ENCODE measurements at regions of chr20 and their contacts with region 1.

Region 1: DNA sequence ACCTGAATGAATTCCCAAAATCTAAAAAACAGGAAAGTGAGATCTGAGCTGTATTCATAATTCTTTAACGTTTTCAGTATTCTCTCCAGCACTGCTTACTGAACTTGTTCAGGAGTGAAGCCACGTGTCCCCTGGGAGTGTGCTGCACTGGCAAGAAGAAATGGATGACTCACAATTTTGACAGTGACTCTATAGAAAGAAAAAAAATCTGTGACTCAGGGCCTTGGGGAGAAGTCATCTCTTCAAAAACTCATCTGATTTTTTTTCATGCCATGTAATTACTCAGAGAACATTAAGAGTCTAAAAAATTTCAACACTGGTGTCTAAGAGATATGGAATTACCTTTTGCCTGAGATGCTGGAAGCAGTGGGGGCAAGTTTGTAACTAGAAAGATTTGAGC is 39.7 kb downstream of the ANKEF1 start:
- DNase-seq: peak; percentile 76
- H3K4me3 ChIP-seq: no peak overlapping the region
- H3K27ac ChIP-seq: peak overlapping the region; percentile 50
- H3K4me1 ChIP-seq: peaks cover 43% of the 10 kb centered on the region
- H3K27me3 ChIP-seq: no peaks in the 10 kb centered on the region
- CTCF ChIP-seq: no peak
- POLR2A ChIP-seq: no peak

Region 2: DNA sequence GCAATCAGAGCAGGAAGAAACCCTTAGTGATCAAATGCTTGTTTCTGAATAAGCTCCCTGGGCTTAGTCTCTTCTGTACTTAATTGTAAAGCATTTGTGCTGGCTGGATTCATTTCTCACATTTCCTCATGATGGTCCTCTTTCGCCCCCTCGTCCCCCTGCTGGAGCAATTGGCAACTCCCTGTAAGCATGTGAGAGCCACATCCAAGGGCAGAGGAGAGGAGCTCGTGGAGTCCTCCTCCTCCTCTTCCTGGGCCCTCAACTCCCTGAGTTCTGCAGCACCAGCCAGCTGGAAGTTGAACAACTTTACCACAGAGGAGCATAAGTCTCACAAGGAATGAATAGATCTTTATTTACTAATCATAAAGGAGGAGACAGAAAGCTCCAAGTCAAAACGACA is 27.1 kb before region 1 on chr20:
- CTCF ChIA-PET with region 1: interaction called, 5 read pairs
- POLR2A ChIA-PET with region 1: no interaction called
- dilution Hi-C with region 1: no loop called
- intact Hi-C with region 1: loop called (anchors 2 kb)
- DNase-seq: no peak
- H3K4me3 ChIP-seq: no peak overlapping the region
- H3K27ac ChIP-seq: no peak overlapping the region
- H3K4me1 ChIP-seq: no peaks in the 10 kb centered on the region
- H3K27me3 ChIP-seq: no peaks in the 10 kb centered on the region
- CTCF ChIP-seq: peak; percentile 12 to 28
- POLR2A ChIP-seq: no peak

Region 3: GRCh38 chr20:10219452-10219791 is 144.9 kb after region 1 on chr20:
- CTCF ChIA-PET with region 1: interaction called, 5 read pairs
- POLR2A ChIA-PET with region 1: interaction called, 3 read pairs
- dilution Hi-C with region 1: no loop called
- intact Hi-C with region 1: loop called (anchors 1 kb)
- DNase-seq: peak; percentile 78
- H3K4me3 ChIP-seq: peak overlapping the region in 2 of 3 experiments; percentile 26 to 75
- H3K27ac ChIP-seq: no peak overlapping the region
- H3K4me1 ChIP-seq: peaks cover 4% of the 10 kb centered on the region
- H3K27me3 ChIP-seq: peaks cover 24 to 36% of the 10 kb centered on the region in 2 experiments
- CTCF ChIP-seq: peak in 1 of 2 donors; percentile 3
- POLR2A ChIP-seq: no peak

Region 4: GRCh38 chr20:10357974-10358373 is 283.5 kb after region 1 on chr20:
- CTCF ChIA-PET with region 1: interaction called, 6 read pairs
- POLR2A ChIA-PET with region 1: no interaction called
- dilution Hi-C with region 1: no loop called
- intact Hi-C with region 1: loop called (anchors 1 kb)
- DNase-seq: peak; percentile 37
- H3K4me3 ChIP-seq: no peak overlapping the region
- H3K27ac ChIP-seq: peak overlapping the region; percentile 45
- H3K4me1 ChIP-seq: peaks cover 44% of the 10 kb centered on the region
- H3K27me3 ChIP-seq: no peaks in the 10 kb centered on the region
- CTCF ChIP-seq: peak; percentile 13 to 25
- POLR2A ChIP-seq: no peak

Region 5: DNA sequence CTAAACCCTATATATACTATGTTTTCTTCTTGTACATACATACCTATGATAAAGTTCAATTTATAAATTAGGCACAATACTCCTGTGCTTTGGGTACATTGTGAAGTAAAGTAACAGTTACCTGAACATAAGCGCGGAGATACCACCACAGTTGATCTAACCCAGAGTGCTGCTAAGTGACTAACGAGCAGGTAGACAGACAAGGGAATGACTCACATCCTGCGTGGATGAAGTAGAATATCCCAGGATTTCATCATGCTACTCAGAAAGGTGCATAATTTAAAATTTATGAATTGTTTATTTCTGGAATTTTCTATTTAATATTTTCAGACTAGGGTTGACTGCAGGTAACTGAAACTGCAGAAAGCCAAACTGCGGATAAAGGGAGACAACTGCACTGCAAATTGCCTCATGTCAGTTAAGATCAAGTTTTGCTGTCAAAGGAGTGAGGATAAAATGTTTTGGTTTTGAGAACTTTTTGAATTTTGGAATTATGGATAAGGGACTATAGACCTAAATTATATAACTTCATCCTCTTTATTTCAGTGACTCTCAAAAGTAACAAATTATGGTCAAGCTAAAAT is 345.1 kb after region 1 on chr20:
- CTCF ChIA-PET with region 1: no interaction called
- POLR2A ChIA-PET with region 1: no interaction called
- dilution Hi-C with region 1: no loop called
- intact Hi-C with region 1: loop called (anchors 5 kb)
- DNase-seq: no peak
- H3K4me3 ChIP-seq: no peak overlapping the region
- H3K27ac ChIP-seq: no peak overlapping the region
- H3K4me1 ChIP-seq: peaks cover 29% of the 10 kb centered on the region
- H3K27me3 ChIP-seq: no peaks in the 10 kb centered on the region
- CTCF ChIP-seq: no peak
- POLR2A ChIP-seq: no peak

Region 6: DNA sequence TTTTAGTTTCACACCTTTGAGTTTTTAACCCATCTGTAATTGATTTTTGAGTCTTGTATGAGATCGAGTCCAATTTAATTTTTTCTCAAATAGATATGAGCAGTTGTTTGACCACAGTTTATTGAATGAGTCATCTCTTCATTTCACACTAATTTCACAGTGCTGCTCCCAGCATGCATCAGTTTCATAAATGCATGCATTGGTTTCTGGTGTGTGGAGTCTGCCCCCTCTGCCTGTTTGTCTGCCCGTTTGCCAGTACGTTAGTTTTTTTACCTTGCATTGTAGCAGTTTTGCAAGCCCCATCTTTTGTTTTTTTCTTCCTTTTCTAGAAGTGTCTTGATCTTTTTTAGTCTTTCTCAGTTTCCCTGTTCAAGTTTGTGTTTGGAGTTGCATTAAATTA is 372.5 kb after region 1 on chr20:
- CTCF ChIA-PET with region 1: no interaction called
- POLR2A ChIA-PET with region 1: no interaction called
- dilution Hi-C with region 1: no loop called
- intact Hi-C with region 1: no loop called
- DNase-seq: peak; percentile 66
- H3K4me3 ChIP-seq: no peak overlapping the region
- H3K27ac ChIP-seq: no peak overlapping the region
- H3K4me1 ChIP-seq: no peaks in the 10 kb centered on the region
- H3K27me3 ChIP-seq: no peaks in the 10 kb centered on the region
- CTCF ChIP-seq: no peak
- POLR2A ChIP-seq: no peak

Region 7: DNA sequence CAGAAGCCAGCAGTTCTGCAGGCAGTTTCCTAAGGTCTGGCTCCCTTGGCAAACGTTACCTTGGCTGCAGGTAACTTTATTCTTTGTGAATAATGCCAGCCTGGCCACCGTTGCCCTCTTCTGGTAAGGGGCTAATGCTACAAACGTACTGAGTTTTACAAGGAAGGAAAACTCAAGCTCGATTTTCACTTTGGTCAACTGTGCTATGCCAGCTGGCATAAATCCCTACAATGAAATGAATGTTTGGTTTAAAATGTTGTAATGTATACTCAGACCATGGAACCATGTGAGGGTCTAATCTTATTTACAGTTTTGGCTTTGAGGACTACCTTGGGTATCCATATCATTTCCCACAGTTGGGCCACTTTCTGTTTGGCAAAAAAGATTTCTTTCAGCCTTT is 462.0 kb after region 1 on chr20:
- CTCF ChIA-PET with region 1: no interaction called
- POLR2A ChIA-PET with region 1: no interaction called
- dilution Hi-C with region 1: no loop called
- intact Hi-C with region 1: loop called (anchors 2 kb)
- DNase-seq: peak; percentile 41
- H3K4me3 ChIP-seq: no peak overlapping the region
- H3K27ac ChIP-seq: no peak overlapping the region
- H3K4me1 ChIP-seq: peaks cover 18% of the 10 kb centered on the region
- H3K27me3 ChIP-seq: no peaks in the 10 kb centered on the region
- CTCF ChIP-seq: peak; percentile 49 to 57
- POLR2A ChIP-seq: no peak